Activated CD8-positive, alpha-beta memory T cell treated with anti-CD3 and anti-CD28 coated beads, Interleukin-2, amount 10 ng/mL, durations not matched to agents 7 days and 5 days (primary cell): ENCODE measurements at regions of chr10 and their contacts with region 1.

Region 1: DNA sequence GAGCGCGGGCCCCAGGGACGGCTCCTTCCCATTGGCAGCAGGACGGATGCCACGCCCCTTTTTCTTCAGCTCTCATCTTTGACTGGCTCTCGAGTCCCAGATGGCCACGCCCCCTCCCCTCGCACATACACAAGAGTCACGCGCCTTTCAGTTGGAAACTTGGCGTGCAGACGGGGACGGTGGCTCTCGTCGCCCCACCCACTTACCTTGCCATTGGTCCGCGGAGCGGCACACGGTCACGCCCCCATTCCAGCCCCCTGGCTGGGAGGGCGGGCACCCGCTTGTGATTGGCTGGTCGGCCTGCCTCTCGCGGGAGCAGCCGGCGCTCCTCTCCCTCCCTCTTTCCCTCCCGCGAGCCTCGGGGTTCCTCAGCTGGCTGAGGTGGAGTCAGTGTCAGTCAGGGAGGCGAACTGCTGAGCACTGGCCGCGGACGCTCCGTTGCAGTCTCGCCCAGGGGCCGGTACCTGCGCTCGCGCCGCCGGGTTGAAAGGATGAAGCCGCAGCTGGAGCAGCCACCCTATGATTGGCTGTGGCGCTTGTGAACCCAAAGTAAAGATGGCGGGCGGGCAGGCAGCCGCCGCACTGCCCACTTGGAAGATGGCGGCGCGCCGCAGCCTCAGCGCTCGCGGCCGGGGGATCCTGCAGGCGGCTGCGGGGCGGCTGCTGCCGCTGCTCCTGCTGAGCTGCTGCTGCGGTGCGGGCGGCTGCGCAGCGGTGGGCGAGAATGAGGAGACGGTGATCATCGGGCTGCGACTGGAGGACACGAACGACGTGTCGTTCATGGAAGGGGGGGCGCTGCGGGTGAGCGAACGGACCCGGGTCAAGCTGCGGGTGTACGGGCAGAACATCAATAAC is at the start of gene CNNM2:
- DNase-seq: peak; percentile 100
- ATAC-seq: peak; percentile 91
- H3K4me3 Mint-ChIP-seq: peak within 1 kb of the TSS; percentile 90
- H3K27ac Mint-ChIP-seq: peak within 1 kb of the TSS; percentile 92
- H3K4me1 Mint-ChIP-seq: peaks cover 61% of the 10 kb centered on the region
- H3K27me3 Mint-ChIP-seq: no peaks in the 10 kb centered on the region
- total RNA-seq, gene CNNM2: 8.0 to 10.1 TPM

Region 2: DNA sequence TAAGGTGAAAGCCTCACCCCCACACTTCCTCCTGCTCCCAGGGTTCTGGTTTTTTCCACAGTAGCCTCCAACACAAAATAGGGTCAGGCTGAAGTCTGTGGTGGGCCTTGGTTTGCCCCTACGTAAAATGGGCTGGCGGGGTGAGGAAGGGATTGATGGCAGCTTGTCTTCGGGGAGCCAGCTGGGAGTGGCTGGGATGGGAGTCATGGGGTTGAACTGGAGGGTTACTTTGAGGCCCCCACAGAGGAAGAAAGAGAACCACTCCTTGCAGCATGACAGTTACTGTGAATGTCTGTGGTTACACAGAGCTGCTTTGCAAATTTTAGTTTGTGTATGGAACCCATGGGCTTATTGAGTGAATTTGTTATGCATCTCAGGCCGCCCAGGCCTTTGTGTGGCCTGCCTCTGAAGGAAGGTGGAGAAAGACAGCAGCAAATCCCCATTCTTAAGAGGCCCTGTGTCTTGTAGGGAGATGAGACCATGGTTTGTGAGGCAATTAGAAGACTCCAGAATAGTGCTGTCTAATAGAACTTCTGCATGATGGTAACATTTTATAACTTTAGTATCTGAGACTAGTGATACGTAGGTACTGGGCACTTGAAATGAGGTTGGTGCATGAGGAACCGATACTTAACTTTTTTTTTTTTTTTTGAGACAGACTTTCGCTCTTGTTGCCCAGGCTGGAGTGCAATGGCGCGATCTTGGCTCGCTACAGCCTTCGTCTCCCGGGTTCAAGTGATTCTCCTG is 265.8 kb before region 1 on chr10:
- CTCF ChIA-PET with region 1: no interaction called
- DNase-seq: peak; percentile 64
- ATAC-seq: peak; percentile 48
- H3K4me3 Mint-ChIP-seq: peak overlapping the region; percentile 54
- H3K27ac Mint-ChIP-seq: peak overlapping the region; percentile 93
- H3K4me1 Mint-ChIP-seq: peaks cover 79% of the 10 kb centered on the region
- H3K27me3 Mint-ChIP-seq: no peaks in the 10 kb centered on the region

Region 3: GRCh38 chr10:102713814-102714620 is 204.2 kb before region 1 on chr10 and contains the start of gene ARL3:
- CTCF ChIA-PET with region 1: interaction called, 11 read pairs
- DNase-seq: peak; percentile 99
- ATAC-seq: peak; percentile 92
- H3K4me3 Mint-ChIP-seq: peak within 1 kb of the TSS; percentile 80
- H3K27ac Mint-ChIP-seq: peak within 1 kb of the TSS; percentile 87
- H3K4me1 Mint-ChIP-seq: peaks cover 64% of the 10 kb centered on the region
- H3K27me3 Mint-ChIP-seq: no peaks in the 10 kb centered on the region
- total RNA-seq, gene ARL3: 7.2 to 9.7 TPM

Region 4: GRCh38 chr10:103053659-103054581 is 135.7 kb after region 1 on chr10:
- CTCF ChIA-PET with region 1: interaction called, 43 read pairs
- DNase-seq: peak; percentile 86
- ATAC-seq: peak; percentile 86
- H3K4me3 Mint-ChIP-seq: peak overlapping the region; percentile 83
- H3K27ac Mint-ChIP-seq: peak overlapping the region; percentile 93
- H3K4me1 Mint-ChIP-seq: peaks cover 33% of the 10 kb centered on the region
- H3K27me3 Mint-ChIP-seq: no peaks in the 10 kb centered on the region

Region 5: GRCh38 chr10:103069453-103070331 is 151.5 kb after region 1 on chr10:
- CTCF ChIA-PET with region 1: interaction called, 92 read pairs
- DNase-seq: peak; percentile 78
- ATAC-seq: peak; percentile 82
- H3K4me3 Mint-ChIP-seq: no peak overlapping the region
- H3K27ac Mint-ChIP-seq: peak overlapping the region; percentile 75
- H3K4me1 Mint-ChIP-seq: peaks cover 34% of the 10 kb centered on the region
- H3K27me3 Mint-ChIP-seq: no peaks in the 10 kb centered on the region

Region 6: DNA sequence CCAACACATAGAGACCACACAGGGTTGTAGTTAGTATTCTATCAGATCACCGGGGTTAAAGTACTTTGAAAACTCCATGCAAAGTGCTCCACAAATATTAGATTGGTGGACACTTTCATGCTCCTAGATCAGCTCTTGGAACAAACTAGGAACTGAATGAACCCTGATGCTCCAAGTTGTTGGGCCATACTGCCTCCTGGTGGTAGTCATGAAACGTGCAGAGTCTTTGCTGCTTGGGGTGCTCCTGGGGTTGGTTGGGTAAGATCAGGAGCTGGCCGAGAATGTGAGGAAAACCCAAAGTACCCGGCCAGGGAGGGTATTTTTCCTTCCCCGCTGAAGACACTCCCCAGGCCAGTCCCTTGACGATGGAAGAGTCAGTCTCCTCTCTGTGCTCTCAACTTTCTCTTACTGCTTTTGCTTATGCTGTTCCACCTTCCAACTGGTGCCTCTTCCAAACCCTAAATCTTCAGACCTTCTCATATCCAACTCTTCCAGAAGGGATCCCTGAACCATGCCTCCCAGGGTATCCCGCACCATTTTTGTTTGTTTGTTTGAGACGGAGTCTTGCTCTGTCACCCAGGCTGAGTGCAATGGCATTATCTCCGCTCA is 326.6 kb after region 1 on chr10:
- CTCF ChIA-PET with region 1: interaction called, 69 read pairs
- DNase-seq: peak; percentile 66
- ATAC-seq: peak; percentile 73
- H3K4me3 Mint-ChIP-seq: no peak overlapping the region
- H3K27ac Mint-ChIP-seq: no peak overlapping the region
- H3K4me1 Mint-ChIP-seq: peaks cover 21% of the 10 kb centered on the region
- H3K27me3 Mint-ChIP-seq: peaks cover 14% of the 10 kb centered on the region